Mammary epithelial cell (primary cell): ENCODE measurements at regions of chr3 and their contacts with region 1.

Region 1: GRCh38 chr3:194682694-194683310 is 2.9 kb upstream of the FAM43A start:
- DNase-seq: peak; percentile 86
- H3K4me3 ChIP-seq: no peak overlapping the region
- H3K27ac ChIP-seq: no peak overlapping the region
- H3K4me1 ChIP-seq: peaks cover 40% of the 10 kb centered on the region
- H3K27me3 ChIP-seq: peaks cover 15% of the 10 kb centered on the region
- CTCF ChIP-seq: peak; percentile 87 to 92

Region 2: DNA sequence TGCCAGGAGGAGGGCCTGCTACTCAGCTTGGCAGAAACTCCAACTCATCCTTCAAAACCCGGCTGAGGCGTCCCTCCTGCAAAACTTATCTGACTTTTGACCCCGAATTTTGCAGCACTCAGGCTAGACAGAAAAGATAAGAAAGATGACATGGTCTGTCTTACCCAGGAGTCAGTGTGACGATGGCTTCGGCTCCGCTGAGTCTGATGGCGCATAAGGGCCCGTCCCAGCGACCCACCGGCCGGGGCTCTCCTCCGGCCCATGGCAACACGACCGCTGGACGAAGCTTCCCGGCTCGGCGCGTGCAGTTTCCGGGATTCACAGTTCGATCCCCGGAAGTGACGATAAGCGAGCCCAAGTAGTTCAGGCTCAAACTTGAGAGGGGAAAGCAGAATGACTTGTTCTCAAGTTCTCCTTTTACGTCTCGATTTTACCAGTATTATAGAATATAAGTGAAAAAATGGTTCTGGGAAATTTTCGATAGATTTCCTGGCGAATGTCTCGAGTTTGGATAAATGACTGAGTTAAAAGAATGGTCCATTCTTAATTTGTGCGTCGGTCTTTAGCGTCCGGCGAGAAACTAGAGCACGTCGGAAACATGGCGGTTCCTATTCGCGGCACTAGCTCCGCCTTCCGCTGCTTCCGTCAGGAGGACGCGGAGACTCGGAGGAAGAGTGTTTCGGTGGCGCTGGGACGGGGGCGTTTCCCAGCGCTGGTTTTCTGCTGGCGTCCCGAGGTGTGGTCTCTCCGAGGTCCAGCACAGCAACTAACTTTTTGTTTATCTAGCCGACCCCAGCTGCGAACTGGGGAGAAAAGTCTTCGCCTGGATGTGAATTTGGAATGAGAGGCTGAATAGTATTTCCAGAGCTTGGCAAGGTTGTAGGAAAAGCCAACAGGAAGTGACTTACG is 10.6 kb before region 1 on chr3 and contains the start of gene LSG1:
- CTCF ChIA-PET with region 1: interaction called, 12 read pairs
- dilution Hi-C with region 1: no loop called
- in situ Hi-C with region 1: no loop called
- intact Hi-C with region 1: no loop called
- DNase-seq: peak; percentile 90
- H3K4me3 ChIP-seq: peak within 1 kb of the TSS; percentile 57 to 96 (median 95)
- H3K27ac ChIP-seq: peak within 1 kb of the TSS; percentile 98
- H3K4me1 ChIP-seq: peaks cover 21% of the 10 kb centered on the region
- H3K27me3 ChIP-seq: no peaks in the 10 kb centered on the region
- CTCF ChIP-seq: no peak
- total RNA-seq, gene LSG1: 33.5 to 33.8 TPM

Region 3: DNA sequence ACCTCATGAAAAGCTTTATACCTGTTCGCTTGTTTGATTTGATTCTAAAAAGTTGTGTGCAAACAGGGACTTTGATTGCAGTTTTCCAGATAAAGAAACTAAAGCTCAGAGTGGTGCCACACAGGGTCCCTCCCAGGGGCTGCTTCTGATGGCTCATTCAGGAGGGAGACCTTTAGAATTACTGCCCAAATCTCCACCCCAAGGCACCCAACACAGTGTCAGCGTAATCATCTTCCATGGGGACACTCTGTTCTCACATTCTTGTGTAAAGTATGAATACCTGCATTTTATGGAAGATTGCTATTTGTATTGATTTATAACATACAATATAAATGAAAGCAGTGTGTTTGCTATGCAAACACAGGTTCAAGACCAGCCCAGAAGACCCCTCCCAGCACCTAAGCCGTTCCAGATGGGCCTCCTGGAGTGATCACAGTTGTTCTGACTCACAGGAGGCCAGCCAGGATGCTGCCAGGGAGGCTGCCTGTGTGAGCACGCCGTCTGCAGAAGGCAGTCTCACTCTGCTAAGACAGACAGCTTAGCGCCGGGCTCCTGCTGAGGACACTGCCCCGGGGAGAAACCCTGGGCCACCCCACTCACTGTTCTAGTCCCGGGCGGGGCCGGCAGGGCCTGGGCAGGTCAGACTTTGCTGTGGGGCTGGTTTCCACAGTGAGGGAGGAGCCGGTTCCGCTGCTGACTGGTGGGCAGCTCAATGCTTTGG is 188.5 kb after region 1 on chr3:
- CTCF ChIA-PET with region 1: interaction called, 4 read pairs
- dilution Hi-C with region 1: no loop called
- in situ Hi-C with region 1: no loop called
- intact Hi-C with region 1: loop called (anchors 5 kb)
- DNase-seq: peak; percentile 88
- H3K4me3 ChIP-seq: no peak overlapping the region
- H3K27ac ChIP-seq: peak overlapping the region; percentile 69
- H3K4me1 ChIP-seq: peaks cover 38% of the 10 kb centered on the region
- H3K27me3 ChIP-seq: no peaks in the 10 kb centered on the region
- CTCF ChIP-seq: peak in 1 of 2 donors; percentile 23

Region 4: DNA sequence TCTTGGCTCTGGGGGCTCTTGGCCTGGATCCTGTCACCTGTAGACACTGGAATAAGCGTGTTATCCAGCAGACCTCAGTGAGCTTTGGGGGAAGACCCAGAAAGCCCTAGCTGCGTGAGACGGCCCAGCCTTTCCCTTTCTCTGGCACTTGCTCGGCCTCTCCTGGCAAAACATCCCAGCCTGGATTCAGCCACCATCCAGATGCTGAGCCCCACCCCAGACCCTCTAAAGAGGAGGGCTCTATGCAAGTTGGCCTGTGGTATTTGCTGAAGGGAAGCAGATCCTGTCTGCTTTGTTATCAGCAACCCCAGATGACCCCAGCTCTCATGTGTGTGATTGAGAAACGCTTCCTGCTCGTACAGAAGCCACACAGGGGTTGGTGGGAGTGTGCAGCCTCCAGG is 270.0 kb after region 1 on chr3:
- CTCF ChIA-PET with region 1: no interaction called
- dilution Hi-C with region 1: no loop called
- in situ Hi-C with region 1: loop called in 1 of 2 experiments (anchors 25 kb)
- intact Hi-C with region 1: loop called (anchors 1 kb)
- DNase-seq: no peak
- H3K4me3 ChIP-seq: no peak overlapping the region
- H3K27ac ChIP-seq: no peak overlapping the region
- H3K4me1 ChIP-seq: no peaks in the 10 kb centered on the region
- H3K27me3 ChIP-seq: no peaks in the 10 kb centered on the region
- CTCF ChIP-seq: no peak

Region 5: GRCh38 chr3:195106418-195106906 is 423.7 kb after region 1 on chr3:
- CTCF ChIA-PET with region 1: no interaction called
- dilution Hi-C with region 1: no loop called
- in situ Hi-C with region 1: loop called (anchors 5 to 10 kb)
- intact Hi-C with region 1: loop called (anchors 1 kb)
- DNase-seq: peak; percentile 25
- H3K4me3 ChIP-seq: peak overlapping the region in 1 of 3 experiments; percentile 45
- H3K27ac ChIP-seq: no peak overlapping the region
- H3K4me1 ChIP-seq: peaks cover 5% of the 10 kb centered on the region
- H3K27me3 ChIP-seq: no peaks in the 10 kb centered on the region
- CTCF ChIP-seq: peak; percentile 80 to 99

Region 6: DNA sequence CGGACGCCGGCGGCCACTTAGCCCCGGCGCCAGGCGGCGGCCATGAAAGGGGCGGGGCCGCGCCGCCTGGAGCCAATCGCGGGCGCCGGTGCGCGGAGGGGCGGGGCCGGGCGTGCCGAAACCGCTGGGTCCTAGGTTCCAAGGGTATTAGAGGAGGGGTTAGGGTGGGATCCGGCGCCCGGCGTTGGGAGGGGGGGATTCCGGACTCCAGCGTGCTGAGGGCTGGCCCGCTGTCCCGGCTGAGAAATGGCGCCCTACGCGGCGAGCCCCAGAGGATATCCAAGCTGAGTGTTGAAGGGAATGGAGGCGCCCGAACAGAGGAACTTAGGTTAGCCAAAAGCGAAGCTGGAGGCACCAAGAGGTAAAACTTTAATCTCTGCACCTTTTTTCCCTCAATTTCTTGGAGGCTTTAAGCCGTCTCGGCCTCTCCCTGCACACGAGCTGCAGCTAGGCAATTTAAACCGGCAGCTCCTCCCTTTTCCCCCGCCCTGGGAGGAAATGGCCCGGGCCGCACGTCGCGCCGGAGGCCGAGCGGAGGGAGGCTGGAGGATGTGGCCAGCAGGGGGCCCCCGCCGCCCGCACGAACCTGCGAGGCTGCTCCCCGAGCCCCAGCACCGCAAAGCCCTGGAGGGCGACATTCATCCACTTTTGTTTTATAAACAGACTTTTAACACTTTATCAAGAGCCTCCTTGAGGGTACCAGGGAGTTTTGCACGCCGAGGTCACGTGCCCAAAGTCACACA is 588.5 kb after region 1 on chr3 and contains the start of gene XXYLT1:
- CTCF ChIA-PET with region 1: no interaction called
- dilution Hi-C with region 1: no loop called
- in situ Hi-C with region 1: no loop called
- intact Hi-C with region 1: loop called (anchors 1 kb)
- DNase-seq: peak; percentile 82
- H3K4me3 ChIP-seq: peak within 1 kb of the TSS; percentile 67 to 82 (median 80)
- H3K27ac ChIP-seq: peak within 1 kb of the TSS; percentile 55
- H3K4me1 ChIP-seq: peaks cover 17% of the 10 kb centered on the region
- H3K27me3 ChIP-seq: no peaks in the 10 kb centered on the region
- CTCF ChIP-seq: peak; percentile 67 to 93
- total RNA-seq, gene XXYLT1: 12.3 to 15.6 TPM

Region 7: GRCh38 chr3:195542698-195543499 is 860.1 kb after region 1 on chr3 and contains the start of gene PPP1R2:
- CTCF ChIA-PET with region 1: interaction called, 4 read pairs
- dilution Hi-C with region 1: no loop called
- in situ Hi-C with region 1: loop called in 1 of 2 experiments (anchors 25 kb)
- intact Hi-C with region 1: loop called (anchors 10 kb)
- DNase-seq: peak; percentile 86
- H3K4me3 ChIP-seq: peak within 1 kb of the TSS; percentile 76 to 93 (median 88)
- H3K27ac ChIP-seq: peak within 1 kb of the TSS; percentile 74
- H3K4me1 ChIP-seq: peaks cover 26% of the 10 kb centered on the region
- H3K27me3 ChIP-seq: no peaks in the 10 kb centered on the region
- CTCF ChIP-seq: no peak
- total RNA-seq, gene PPP1R2: 45.5 to 129 TPM